Activated CD4-positive, alpha-beta memory T cell treated with anti-CD3 and anti-CD28 coated beads for 36 hours (primary cell): ENCODE measurements at regions of chr20 and their contacts with region 1.

Region 1: GRCh38 chr20:20360464-20360863 is 7.4 kb upstream of the INSM1 start:
- DNase-seq: peak; percentile 59
- H3K4me3 Mint-ChIP-seq: no peak overlapping the region
- H3K27ac Mint-ChIP-seq: no peak overlapping the region
- H3K4me1 Mint-ChIP-seq: peaks cover 24% of the 10 kb centered on the region
- H3K27me3 Mint-ChIP-seq: peaks cover 48% of the 10 kb centered on the region

Region 2: GRCh38 chr20:20407891-20408805 is 47.7 kb after region 1 on chr20:
- CTCF ChIA-PET with region 1: no interaction called
- POLR2A ChIA-PET with region 1: no interaction called
- intact Hi-C with region 1: loop called (anchors 2 kb)
- DNase-seq: no peak
- H3K4me3 Mint-ChIP-seq: no peak overlapping the region
- H3K27ac Mint-ChIP-seq: no peak overlapping the region
- H3K4me1 Mint-ChIP-seq: peaks cover 25% of the 10 kb centered on the region
- H3K27me3 Mint-ChIP-seq: no peaks in the 10 kb centered on the region

Region 3: GRCh38 chr20:20489054-20489453 is 128.6 kb after region 1 on chr20:
- CTCF ChIA-PET with region 1: interaction called, 5 read pairs
- POLR2A ChIA-PET with region 1: no interaction called
- intact Hi-C with region 1: loop called (anchors 2 kb)
- DNase-seq: no peak
- H3K4me3 Mint-ChIP-seq: peak overlapping the region; percentile 69
- H3K27ac Mint-ChIP-seq: peak overlapping the region; percentile 85
- H3K4me1 Mint-ChIP-seq: peaks cover 65% of the 10 kb centered on the region
- H3K27me3 Mint-ChIP-seq: no peaks in the 10 kb centered on the region

Region 4: DNA sequence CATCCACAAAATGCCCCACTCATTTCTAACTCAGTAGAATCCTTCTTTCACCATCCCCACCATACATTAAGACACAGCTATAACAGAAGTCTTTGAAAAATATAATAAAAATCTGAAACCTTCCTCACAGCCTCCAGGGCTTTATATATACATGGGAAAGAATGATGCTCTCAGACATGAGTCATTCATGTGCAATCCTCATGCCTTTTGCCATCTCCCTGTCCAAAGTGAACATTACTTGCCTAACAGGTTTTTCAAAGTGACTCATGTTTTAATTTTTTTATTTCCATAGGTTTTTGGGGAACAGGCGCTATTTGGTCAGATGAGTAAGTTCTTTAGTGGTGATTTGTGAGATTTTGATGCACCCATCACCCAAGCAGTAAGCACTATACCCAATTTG is 189.3 kb after region 1 on chr20:
- CTCF ChIA-PET with region 1: no interaction called
- POLR2A ChIA-PET with region 1: no interaction called
- intact Hi-C with region 1: loop called (anchors 5 kb)
- DNase-seq: no peak
- H3K4me3 Mint-ChIP-seq: no peak overlapping the region
- H3K27ac Mint-ChIP-seq: no peak overlapping the region
- H3K4me1 Mint-ChIP-seq: peaks cover 39% of the 10 kb centered on the region
- H3K27me3 Mint-ChIP-seq: no peaks in the 10 kb centered on the region

Region 5: GRCh38 chr20:20593447-20594170 is 233.1 kb after region 1 on chr20:
- CTCF ChIA-PET with region 1: interaction called, 26 read pairs
- POLR2A ChIA-PET with region 1: no interaction called
- intact Hi-C with region 1: loop called (anchors 2 kb)
- DNase-seq: peak; percentile 29
- H3K4me3 Mint-ChIP-seq: no peak overlapping the region
- H3K27ac Mint-ChIP-seq: no peak overlapping the region
- H3K4me1 Mint-ChIP-seq: no peaks in the 10 kb centered on the region
- H3K27me3 Mint-ChIP-seq: no peaks in the 10 kb centered on the region

Region 6: GRCh38 chr20:21395666-21396598 is 1035.5 kb after region 1 on chr20:
- CTCF ChIA-PET with region 1: no interaction called
- POLR2A ChIA-PET with region 1: no interaction called
- intact Hi-C with region 1: loop called (anchors 10 kb)
- DNase-seq: peak; percentile 64
- H3K4me3 Mint-ChIP-seq: peak overlapping the region; percentile 33
- H3K27ac Mint-ChIP-seq: no peak overlapping the region
- H3K4me1 Mint-ChIP-seq: peaks cover 19% of the 10 kb centered on the region
- H3K27me3 Mint-ChIP-seq: peaks cover 72% of the 10 kb centered on the region